H1 (cell line): ENCODE measurements at regions of chr4 and their contacts with region 1.

Region 1: DNA sequence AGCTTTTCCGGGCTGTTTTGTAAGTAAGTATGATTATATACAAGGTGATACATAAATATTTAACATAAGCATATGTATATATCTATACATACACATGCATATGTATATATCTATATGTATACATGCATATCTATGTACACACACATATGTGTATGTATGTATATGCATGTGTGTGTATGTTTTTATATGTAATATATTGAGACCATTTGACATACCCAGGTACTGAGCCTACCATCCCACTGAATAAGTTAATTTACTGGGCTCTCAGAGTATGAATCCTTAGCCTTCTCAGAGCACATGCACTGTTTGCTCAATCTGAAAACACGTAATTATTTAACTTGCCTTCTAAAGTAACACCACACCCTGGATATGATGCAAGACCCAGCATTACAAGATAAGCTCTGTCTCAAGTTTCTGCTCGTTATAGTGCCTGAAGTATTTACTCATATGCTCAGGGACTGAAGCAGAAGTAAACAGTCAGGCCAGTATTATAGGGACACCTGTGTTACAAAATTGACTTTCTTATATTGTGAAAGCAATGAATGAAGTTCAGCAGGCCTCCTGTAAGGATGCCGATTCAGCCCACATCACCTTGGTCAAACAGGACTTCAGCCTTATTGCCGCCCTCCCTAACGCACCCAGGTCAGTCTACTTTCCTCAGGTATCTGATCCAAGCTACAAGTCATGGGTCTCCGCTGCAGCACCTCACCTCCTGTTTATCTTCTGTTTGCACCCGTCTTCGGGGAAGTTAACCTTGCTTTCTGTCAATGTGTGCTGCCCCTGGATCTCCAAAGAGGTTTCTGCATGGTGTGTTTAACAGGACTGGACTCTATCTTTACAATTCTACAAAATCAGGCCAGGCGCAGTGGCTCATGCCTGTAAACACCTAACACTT is 43.0 kb upstream of the KLF3 start:
- DNase-seq: peak in 1 of 2 experiments; percentile 20
- H3K4me3 ChIP-seq: no peak overlapping the region
- H3K27ac ChIP-seq: no peak overlapping the region
- H3K4me1 ChIP-seq: no peaks in the 10 kb centered on the region
- H3K27me3 ChIP-seq: no peaks in the 10 kb centered on the region
- CTCF ChIP-seq: no peak
- EP300 ChIP-seq: no peak
- POLR2A ChIP-seq: no peak
- RAD21 ChIP-seq: no peak

Region 2: DNA sequence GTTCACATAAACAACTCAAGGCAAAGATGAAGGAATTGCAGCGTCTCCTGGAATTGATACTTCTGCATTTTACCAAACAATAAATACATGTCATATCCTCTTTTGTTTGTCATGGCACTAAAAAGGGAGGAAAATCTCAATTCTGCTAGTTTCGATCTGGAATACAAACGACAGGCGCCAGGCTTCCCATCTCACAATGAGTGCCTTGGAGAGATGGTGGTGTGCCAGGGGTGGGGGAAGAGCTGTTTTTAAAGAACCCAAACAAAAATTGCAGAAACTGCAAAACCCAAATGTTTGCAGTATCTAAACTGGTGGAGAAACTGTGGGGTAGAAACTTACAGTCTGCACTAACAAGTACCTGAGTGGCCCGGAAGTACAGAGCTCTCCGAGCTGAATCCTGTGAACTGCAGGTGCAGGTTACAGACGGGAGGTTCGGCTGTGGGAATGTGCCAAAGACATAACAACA is 10.0 kb before region 1 on chr4:
- CTCF ChIA-PET with region 1: interaction called, 10 read pairs
- POLR2A ChIA-PET with region 1: no interaction called
- DNase-seq: no peak
- H3K4me3 ChIP-seq: no peak overlapping the region
- H3K27ac ChIP-seq: no peak overlapping the region
- H3K4me1 ChIP-seq: peaks cover 0 to 9% (median 3%) of the 10 kb centered on the region in 4 experiments; a peak in 3 of 7 replicates
- H3K27me3 ChIP-seq: no peaks in the 10 kb centered on the region
- CTCF ChIP-seq: no peak
- EP300 ChIP-seq: no peak
- POLR2A ChIP-seq: no peak
- RAD21 ChIP-seq: no peak